A673 (cell line): ENCODE measurements at regions of chr11 and their contacts with region 1.

Region 1: GRCh38 chr11:126194121-126194543 is 17.3 kb downstream of the RPUSD4 start:
- DNase-seq: peak; percentile 76
- H3K4me3 ChIP-seq: no peak overlapping the region
- H3K27ac ChIP-seq: no peak overlapping the region
- H3K4me1 ChIP-seq: no peaks in the 10 kb centered on the region
- H3K27me3 ChIP-seq: no peaks in the 10 kb centered on the region
- CTCF ChIP-seq: peak; percentile 90

Region 2: GRCh38 chr11:125923012-125923579 is 271.0 kb before region 1 on chr11:
- CTCF ChIA-PET with region 1: interaction called, 7 read pairs
- POLR2A ChIA-PET with region 1: no interaction called
- intact Hi-C with region 1: loop called (anchors 1 kb)
- DNase-seq: peak; percentile 88
- H3K4me3 ChIP-seq: no peak overlapping the region
- H3K27ac ChIP-seq: no peak overlapping the region
- H3K4me1 ChIP-seq: no peaks in the 10 kb centered on the region
- H3K27me3 ChIP-seq: peaks cover 7% of the 10 kb centered on the region
- CTCF ChIP-seq: peak; percentile 95

Region 3: GRCh38 chr11:125941619-125942611 is 252.2 kb before region 1 on chr11:
- CTCF ChIA-PET with region 1: interaction called, 8 read pairs
- POLR2A ChIA-PET with region 1: no interaction called
- intact Hi-C with region 1: loop called (anchors 5 kb)
- DNase-seq: peak; percentile 66
- H3K4me3 ChIP-seq: no peak overlapping the region
- H3K27ac ChIP-seq: no peak overlapping the region
- H3K4me1 ChIP-seq: no peaks in the 10 kb centered on the region
- H3K27me3 ChIP-seq: no peaks in the 10 kb centered on the region
- CTCF ChIP-seq: peak; percentile 89

Region 4: DNA sequence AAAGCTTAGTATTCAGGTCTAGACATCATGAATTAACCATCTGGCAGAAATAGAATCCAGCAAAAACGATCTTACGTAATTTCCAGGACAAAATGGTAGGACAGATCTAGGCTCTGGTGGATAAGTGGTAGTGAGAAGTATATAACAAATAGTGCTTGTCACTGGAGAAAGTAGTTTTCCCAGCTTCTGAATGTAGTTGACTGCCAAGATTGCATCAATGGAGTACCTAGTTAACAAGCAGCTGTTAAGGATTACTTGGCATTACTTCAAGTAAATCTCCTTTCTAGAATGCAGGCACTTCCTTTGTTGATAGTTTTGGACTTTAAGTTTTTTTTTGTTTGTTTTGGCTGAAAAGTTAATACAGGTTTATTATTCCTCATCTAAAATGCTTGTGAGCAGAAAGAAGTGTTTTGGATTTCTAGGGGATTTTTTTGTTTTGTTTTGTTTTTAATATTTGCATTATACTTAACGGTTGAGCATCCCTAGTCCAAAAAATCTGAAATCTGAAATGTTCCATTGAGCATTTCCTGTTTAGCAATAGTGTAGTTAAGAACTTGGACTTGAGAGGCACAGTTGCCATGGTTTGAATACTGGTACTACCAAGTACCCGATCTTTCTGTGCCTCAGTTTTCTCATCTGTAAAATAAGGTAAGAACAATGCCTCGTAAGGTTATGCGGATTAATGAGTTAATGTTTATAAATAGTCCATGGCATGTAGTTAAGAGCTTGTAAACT is 37.8 kb after region 1 on chr11:
- CTCF ChIA-PET with region 1: no interaction called
- POLR2A ChIA-PET with region 1: no interaction called
- intact Hi-C with region 1: no loop called
- DNase-seq: peak; percentile 80
- H3K4me3 ChIP-seq: no peak overlapping the region
- H3K27ac ChIP-seq: peak overlapping the region; percentile 31
- H3K4me1 ChIP-seq: peaks cover 29% of the 10 kb centered on the region
- H3K27me3 ChIP-seq: no peaks in the 10 kb centered on the region
- CTCF ChIP-seq: no peak